PC-3 (cell line): ENCODE measurements at regions of chr13 and their contacts with region 1.

Region 1: DNA sequence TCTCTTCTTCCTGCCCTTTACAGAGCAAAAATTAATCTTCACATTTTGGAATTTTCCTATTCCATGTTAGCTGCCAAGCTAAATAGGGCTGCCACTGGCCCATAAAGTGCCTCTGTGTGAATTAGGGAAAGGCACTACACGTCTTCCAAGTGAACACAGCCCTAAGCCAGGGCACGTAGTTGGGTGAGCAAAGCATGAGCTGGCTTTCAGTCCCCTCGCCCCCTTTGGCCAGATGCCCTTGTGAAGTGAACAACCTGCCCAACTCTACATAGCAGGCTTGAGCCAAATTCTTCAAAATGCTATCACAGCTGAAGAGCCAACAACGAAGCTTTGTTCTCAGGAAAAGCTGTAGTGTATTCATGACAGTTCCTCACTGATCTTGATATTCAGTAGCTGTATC is 213.1 kb downstream of the OXGR1 start:
- DNase-seq: peak; percentile 66
- ATAC-seq: peak; percentile 90
- H3K4me3 ChIP-seq: no peak overlapping the region
- H3K27ac ChIP-seq: 0 out of 2 replicates have a peak overlapping the region, but pooled peaks have one; percentile 11
- H3K4me1 ChIP-seq: no peaks in the 10 kb centered on the region
- H3K27me3 ChIP-seq: no peaks in the 10 kb centered on the region
- CTCF ChIP-seq: no peak

Region 2: DNA sequence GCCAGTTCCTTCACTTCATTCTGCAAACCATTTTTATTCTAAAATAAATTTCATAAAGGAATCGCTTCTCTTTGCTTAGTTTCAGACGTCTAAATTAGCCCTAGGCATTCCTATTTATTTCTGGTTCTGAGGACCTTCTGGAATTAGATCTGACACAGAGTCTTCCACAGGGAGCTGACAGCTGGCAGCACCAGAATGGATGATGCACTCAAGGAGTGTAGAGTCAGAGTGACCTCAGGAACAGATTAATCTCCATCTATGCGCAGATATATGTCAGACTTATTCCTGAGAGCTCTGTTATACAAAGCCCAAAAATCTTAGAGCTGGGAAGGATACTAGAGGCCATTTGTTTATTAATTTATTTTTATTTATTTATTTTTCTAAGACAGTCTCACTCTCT is 240.5 kb before region 1 on chr13:
- CTCF ChIA-PET with region 1: no interaction called
- POLR2A ChIA-PET with region 1: no interaction called
- intact Hi-C with region 1: loop called (anchors 10 kb)
- DNase-seq: no peak
- ATAC-seq: no peak
- H3K4me3 ChIP-seq: no peak overlapping the region
- H3K27ac ChIP-seq: no peak overlapping the region
- H3K4me1 ChIP-seq: no peaks in the 10 kb centered on the region
- H3K27me3 ChIP-seq: no peaks in the 10 kb centered on the region
- CTCF ChIP-seq: no peak

Region 3: DNA sequence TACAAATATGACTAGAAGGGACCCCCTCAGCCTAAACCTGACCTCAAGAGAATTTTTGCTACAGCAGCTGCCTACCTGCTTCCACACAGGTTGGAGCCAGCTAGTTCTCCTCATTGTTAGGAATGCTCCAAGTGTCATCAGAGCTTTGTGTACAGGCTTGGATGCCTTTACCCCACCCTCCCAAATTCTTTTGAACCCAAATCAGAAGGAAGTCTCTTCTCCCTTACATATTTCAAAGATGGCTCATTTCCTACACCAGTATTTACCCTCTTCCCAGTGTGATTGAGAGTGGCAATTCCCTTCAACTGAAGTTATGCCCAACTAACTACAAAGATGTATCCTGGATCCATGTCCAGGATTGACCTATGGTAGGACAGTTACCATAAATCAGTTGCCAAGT is 110.1 kb before region 1 on chr13:
- CTCF ChIA-PET with region 1: no interaction called
- POLR2A ChIA-PET with region 1: no interaction called
- intact Hi-C with region 1: loop called (anchors 2 kb)
- DNase-seq: peak; percentile 72
- ATAC-seq: peak; percentile 47
- H3K4me3 ChIP-seq: no peak overlapping the region
- H3K27ac ChIP-seq: peak overlapping the region; percentile 82
- H3K4me1 ChIP-seq: peaks cover 31% of the 10 kb centered on the region
- H3K27me3 ChIP-seq: no peaks in the 10 kb centered on the region
- CTCF ChIP-seq: no peak

Region 4: DNA sequence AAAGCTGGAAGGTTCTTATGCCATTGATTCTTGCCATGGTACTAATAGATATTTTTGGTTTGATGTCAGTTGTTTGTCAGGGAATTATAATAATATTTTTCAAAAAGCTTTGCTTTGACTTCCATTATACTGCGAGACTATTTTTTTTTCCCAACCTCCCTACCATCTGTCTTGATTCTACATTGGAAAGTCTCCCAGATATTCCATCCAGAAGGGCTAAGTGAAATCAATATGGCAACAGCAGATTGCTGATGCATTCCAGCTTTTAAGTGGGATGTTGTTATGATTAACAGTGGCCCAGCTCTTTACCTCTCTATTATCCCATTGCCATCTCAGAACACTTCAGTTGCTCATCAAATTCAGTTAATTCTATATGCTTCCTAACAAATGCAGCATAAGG is 34.3 kb before region 1 on chr13:
- CTCF ChIA-PET with region 1: no interaction called
- POLR2A ChIA-PET with region 1: no interaction called
- intact Hi-C with region 1: loop called (anchors 1 kb)
- DNase-seq: no peak
- ATAC-seq: no peak
- H3K4me3 ChIP-seq: no peak overlapping the region
- H3K27ac ChIP-seq: no peak overlapping the region
- H3K4me1 ChIP-seq: no peaks in the 10 kb centered on the region
- H3K27me3 ChIP-seq: no peaks in the 10 kb centered on the region
- CTCF ChIP-seq: no peak

Region 5: DNA sequence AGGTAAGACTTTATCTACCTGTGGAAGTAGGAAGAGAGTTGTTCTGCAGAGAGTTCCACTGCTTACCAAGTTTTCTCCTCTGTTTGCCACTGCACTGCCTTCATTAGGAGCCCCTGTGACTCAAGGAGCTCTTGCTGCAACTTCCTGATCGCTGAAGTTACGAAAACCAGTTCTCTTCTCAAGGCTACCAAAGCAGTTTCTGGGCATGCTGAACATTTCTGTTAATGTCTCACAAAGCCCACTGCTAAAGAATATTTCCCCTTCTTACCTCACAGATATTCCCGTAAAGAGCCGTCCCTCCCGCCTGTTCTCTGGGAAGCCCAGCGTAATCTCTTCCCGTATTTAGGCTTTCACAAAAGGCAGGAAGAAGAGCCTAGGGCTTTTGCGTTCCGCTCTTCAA is 295.8 kb after region 1 on chr13:
- CTCF ChIA-PET with region 1: no interaction called
- POLR2A ChIA-PET with region 1: no interaction called
- intact Hi-C with region 1: no loop called
- DNase-seq: no peak
- ATAC-seq: no peak
- H3K4me3 ChIP-seq: no peak overlapping the region
- H3K27ac ChIP-seq: no peak overlapping the region
- H3K4me1 ChIP-seq: no peaks in the 10 kb centered on the region
- H3K27me3 ChIP-seq: peaks cover 8% of the 10 kb centered on the region; the same call in 1 of the 2 replicates
- CTCF ChIP-seq: no peak